ENCODE measurements at regions of chr14 and their contacts with region 1.

Region 1: GRCh38 chr14:64478634-64479250 is 13.4 kb downstream of the AKAP5 start:
- DNase-seq: no peak
- ATAC-seq: no peak
- H3K4me3 ChIP-seq: no peak overlapping the region
- H3K27ac ChIP-seq: no peak overlapping the region
- H3K4me1 ChIP-seq: peaks cover 3 to 4% of the 10 kb centered on the region in 2 donors
- H3K27me3 ChIP-seq: no peaks in the 10 kb centered on the region
- CTCF ChIP-seq: peak in 3 of 5 experiments; percentile 12 to 38 (median 13)
- POLR2A ChIP-seq: no peak

Region 2: DNA sequence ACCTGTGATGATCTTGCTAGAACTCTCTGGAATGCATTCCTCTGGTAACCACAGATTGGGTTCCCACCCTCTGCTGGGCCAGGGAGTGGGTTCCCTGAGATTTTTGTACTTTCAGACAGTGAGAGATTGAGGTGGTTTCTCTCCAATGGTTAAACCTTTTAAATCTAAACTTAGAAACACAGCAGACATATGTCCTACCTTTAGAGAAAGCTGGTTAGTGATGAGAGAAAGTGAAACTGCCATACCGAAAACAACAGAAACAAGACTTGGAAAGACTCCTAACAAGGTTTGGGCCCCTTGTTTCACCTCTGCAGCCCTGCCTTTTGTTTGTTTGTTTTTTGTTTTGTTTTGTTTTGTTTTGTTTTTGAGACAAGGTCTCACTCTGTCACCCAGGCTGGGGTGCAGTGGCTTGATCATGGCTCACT is 741.1 kb before region 1 on chr14:
- in situ Hi-C with region 1: no loop called
- intact Hi-C with region 1: no loop called
- DNase-seq: no peak
- ATAC-seq: no peak
- H3K4me3 ChIP-seq: no peak overlapping the region
- H3K27ac ChIP-seq: no peak overlapping the region
- H3K4me1 ChIP-seq: no peaks in the 10 kb centered on the region
- H3K27me3 ChIP-seq: no peaks in the 10 kb centered on the region
- CTCF ChIP-seq: no peak
- POLR2A ChIP-seq: no peak

Region 3: DNA sequence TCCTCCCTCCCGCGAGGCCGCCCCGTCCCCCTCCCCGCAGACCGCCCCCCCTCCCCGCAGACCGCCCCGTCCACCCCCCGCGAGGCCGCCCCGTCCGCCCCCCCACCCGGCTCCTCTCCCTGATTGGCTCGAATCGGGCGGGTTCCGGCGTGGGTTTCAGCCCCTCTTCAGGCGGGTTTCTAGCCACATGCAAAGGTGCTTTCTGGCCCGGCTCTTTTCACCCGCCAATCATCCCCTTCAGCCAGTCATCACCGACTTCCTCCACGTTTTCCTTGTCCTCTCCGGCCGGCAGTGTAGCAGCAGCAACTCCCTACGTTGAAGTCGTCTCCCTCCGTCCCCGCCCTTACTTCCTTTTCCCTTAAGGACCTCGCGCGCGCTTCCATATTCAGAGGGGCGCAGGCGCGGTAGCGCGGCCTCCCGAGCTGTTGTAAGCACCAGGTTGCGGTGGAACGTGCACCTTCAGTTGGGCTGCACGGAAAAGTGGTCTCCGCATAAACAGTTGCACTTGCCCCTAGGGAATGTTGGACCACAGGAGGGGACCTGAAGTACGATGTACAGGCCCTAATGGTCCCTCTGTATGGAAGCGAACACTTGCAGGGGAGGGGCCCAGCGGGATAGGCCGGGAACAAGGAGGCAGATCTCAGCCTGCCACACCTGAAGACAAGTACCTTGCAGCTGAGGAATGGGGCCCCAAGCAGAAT is 140.0 kb before region 1 on chr14:
- in situ Hi-C with region 1: loop called in 1 of 4 experiments (anchors 10 kb)
- intact Hi-C with region 1: loop called (anchors 10 kb)
- DNase-seq: peak; percentile 89 to 93
- ATAC-seq: peak; percentile 96 to 97
- H3K4me3 ChIP-seq: peak overlapping the region; percentile 63 to 90 (median 79)
- H3K27ac ChIP-seq: peak overlapping the region; percentile 70 to 82 (median 74)
- H3K4me1 ChIP-seq: peaks cover 6 to 9% of the 10 kb centered on the region in 2 donors
- H3K27me3 ChIP-seq: no peaks in the 10 kb centered on the region
- CTCF ChIP-seq: no peak
- POLR2A ChIP-seq: peak; percentile 51 to 82

Region 4: GRCh38 chr14:64438181-64438841 is 40.4 kb before region 1 on chr14:
- in situ Hi-C with region 1: no loop called
- intact Hi-C with region 1: loop called (anchors 5 kb)
- DNase-seq: no peak
- ATAC-seq: no peak
- H3K4me3 ChIP-seq: no peak overlapping the region
- H3K27ac ChIP-seq: no peak overlapping the region
- H3K4me1 ChIP-seq: no peaks in the 10 kb centered on the region
- H3K27me3 ChIP-seq: no peaks in the 10 kb centered on the region
- CTCF ChIP-seq: no peak
- POLR2A ChIP-seq: no peak

Measured in gastrocnemius medialis (tissue), 4 donors.